CD8-positive, alpha-beta T cell (primary cell): ENCODE measurements at regions of chr1 and their contacts with region 1.

Region 1: GRCh38 chr1:82045221-82045620 is 244.5 kb downstream of the ADGRL2 start:
- DNase-seq: no peak
- ATAC-seq: no peak
- H3K4me3 ChIP-seq: no peak overlapping the region
- H3K4me3 Mint-ChIP-seq: no peak overlapping the region
- H3K27ac ChIP-seq: no peak overlapping the region
- H3K27ac Mint-ChIP-seq: no peak overlapping the region
- H3K4me1 ChIP-seq: no peaks in the 10 kb centered on the region
- H3K4me1 Mint-ChIP-seq: no peaks in the 10 kb centered on the region
- H3K27me3 ChIP-seq: no peaks in the 10 kb centered on the region
- H3K27me3 Mint-ChIP-seq: peaks cover 11% of the 10 kb centered on the region
- CTCF ChIP-seq: no peak

Region 2: DNA sequence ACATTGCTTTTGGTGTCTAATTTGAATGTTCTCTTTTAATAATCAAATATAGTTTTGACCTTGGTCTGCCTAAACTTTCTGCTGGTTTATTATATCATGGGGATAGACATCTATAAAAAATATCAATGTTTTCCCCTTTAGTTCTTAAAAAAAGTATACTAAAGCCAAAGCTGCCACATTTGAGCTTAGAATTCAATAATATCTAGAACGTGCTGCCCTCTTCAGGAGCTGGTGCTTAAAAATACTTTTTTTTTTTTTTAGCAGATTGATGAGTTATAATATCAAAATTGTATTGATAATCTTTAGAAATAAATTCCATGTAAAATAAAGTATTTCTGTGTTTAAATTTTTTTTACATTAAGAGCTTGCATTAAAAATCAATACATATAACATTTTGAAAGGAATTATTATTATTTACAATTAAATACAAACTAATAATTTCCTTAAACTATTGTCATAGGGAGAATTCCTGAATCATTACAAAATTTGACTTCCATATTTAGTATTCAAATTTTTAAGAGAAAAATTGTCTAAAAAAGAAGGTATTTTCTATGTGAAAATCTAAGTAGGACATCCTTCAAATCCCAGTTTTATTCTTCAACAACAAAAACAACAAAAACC is 284.6 kb before region 1 on chr1:
- CTCF ChIA-PET with region 1: no interaction called
- POLR2A ChIA-PET with region 1: no interaction called
- intact Hi-C with region 1: no loop called
- DNase-seq: no peak
- ATAC-seq: no peak
- H3K4me3 ChIP-seq: no peak overlapping the region
- H3K4me3 Mint-ChIP-seq: no peak overlapping the region
- H3K27ac ChIP-seq: no peak overlapping the region
- H3K27ac Mint-ChIP-seq: no peak overlapping the region
- H3K4me1 ChIP-seq: no peaks in the 10 kb centered on the region
- H3K4me1 Mint-ChIP-seq: no peaks in the 10 kb centered on the region
- H3K27me3 ChIP-seq: no peaks in the 10 kb centered on the region
- H3K27me3 Mint-ChIP-seq: peaks cover 2% of the 10 kb centered on the region
- CTCF ChIP-seq: no peak

Region 3: GRCh38 chr1:82013702-82014101 is 31.5 kb before region 1 on chr1:
- CTCF ChIA-PET with region 1: no interaction called
- POLR2A ChIA-PET with region 1: no interaction called
- intact Hi-C with region 1: no loop called
- DNase-seq: no peak
- ATAC-seq: no peak
- H3K4me3 ChIP-seq: no peak overlapping the region
- H3K4me3 Mint-ChIP-seq: no peak overlapping the region
- H3K27ac ChIP-seq: no peak overlapping the region
- H3K27ac Mint-ChIP-seq: no peak overlapping the region
- H3K4me1 ChIP-seq: no peaks in the 10 kb centered on the region
- H3K4me1 Mint-ChIP-seq: no peaks in the 10 kb centered on the region
- H3K27me3 ChIP-seq: no peaks in the 10 kb centered on the region
- H3K27me3 Mint-ChIP-seq: no peaks in the 10 kb centered on the region
- CTCF ChIP-seq: no peak

Region 4: GRCh38 chr1:82032068-82032467 is 13.2 kb before region 1 on chr1:
- CTCF ChIA-PET with region 1: no interaction called
- POLR2A ChIA-PET with region 1: no interaction called
- intact Hi-C with region 1: no loop called
- DNase-seq: no peak
- ATAC-seq: no peak
- H3K4me3 ChIP-seq: no peak overlapping the region
- H3K4me3 Mint-ChIP-seq: no peak overlapping the region
- H3K27ac ChIP-seq: no peak overlapping the region
- H3K27ac Mint-ChIP-seq: no peak overlapping the region
- H3K4me1 ChIP-seq: no peaks in the 10 kb centered on the region
- H3K4me1 Mint-ChIP-seq: no peaks in the 10 kb centered on the region
- H3K27me3 ChIP-seq: no peaks in the 10 kb centered on the region
- H3K27me3 Mint-ChIP-seq: no peaks in the 10 kb centered on the region
- CTCF ChIP-seq: no peak

Region 5: GRCh38 chr1:82090104-82090503 is 44.9 kb after region 1 on chr1:
- CTCF ChIA-PET with region 1: no interaction called
- POLR2A ChIA-PET with region 1: no interaction called
- intact Hi-C with region 1: loop called in 1 of 2 experiments (anchors 1 kb)
- DNase-seq: no peak
- ATAC-seq: no peak
- H3K4me3 ChIP-seq: no peak overlapping the region
- H3K4me3 Mint-ChIP-seq: no peak overlapping the region
- H3K27ac ChIP-seq: no peak overlapping the region
- H3K27ac Mint-ChIP-seq: no peak overlapping the region
- H3K4me1 ChIP-seq: no peaks in the 10 kb centered on the region
- H3K4me1 Mint-ChIP-seq: no peaks in the 10 kb centered on the region
- H3K27me3 ChIP-seq: no peaks in the 10 kb centered on the region
- H3K27me3 Mint-ChIP-seq: no peaks in the 10 kb centered on the region
- CTCF ChIP-seq: no peak

Region 6: GRCh38 chr1:82152356-82153272 is 107.4 kb after region 1 on chr1:
- CTCF ChIA-PET with region 1: no interaction called
- POLR2A ChIA-PET with region 1: no interaction called
- intact Hi-C with region 1: no loop called
- DNase-seq: no peak
- ATAC-seq: no peak
- H3K4me3 ChIP-seq: no peak overlapping the region
- H3K4me3 Mint-ChIP-seq: no peak overlapping the region
- H3K27ac ChIP-seq: no peak overlapping the region
- H3K27ac Mint-ChIP-seq: no peak overlapping the region
- H3K4me1 ChIP-seq: no peaks in the 10 kb centered on the region
- H3K4me1 Mint-ChIP-seq: no peaks in the 10 kb centered on the region
- H3K27me3 ChIP-seq: no peaks in the 10 kb centered on the region
- H3K27me3 Mint-ChIP-seq: no peaks in the 10 kb centered on the region
- CTCF ChIP-seq: no peak